ENCODE measurements at regions of chr11 and their contacts with region 1.

Region 1: GRCh38 chr11:88535916-88536547 is 198.5 kb upstream of the CTSC start:
- DNase-seq: no peak
- ATAC-seq: no peak
- H3K4me3 Mint-ChIP-seq: no peak overlapping the region
- H3K27ac Mint-ChIP-seq: no peak overlapping the region
- H3K4me1 Mint-ChIP-seq: peaks cover 8% of the 10 kb centered on the region
- H3K27me3 Mint-ChIP-seq: peaks cover 6% of the 10 kb centered on the region

Region 2: GRCh38 chr11:88484873-88485621 is 51.0 kb before region 1 on chr11:
- CTCF ChIA-PET with region 1: interaction called, 10 read pairs
- POLR2A ChIA-PET with region 1: no interaction called
- DNase-seq: peak; percentile 38
- ATAC-seq: peak; percentile 82
- H3K4me3 Mint-ChIP-seq: no peak overlapping the region
- H3K27ac Mint-ChIP-seq: no peak overlapping the region
- H3K4me1 Mint-ChIP-seq: peaks cover 4% of the 10 kb centered on the region
- H3K27me3 Mint-ChIP-seq: peaks cover 5% of the 10 kb centered on the region

Region 3: DNA sequence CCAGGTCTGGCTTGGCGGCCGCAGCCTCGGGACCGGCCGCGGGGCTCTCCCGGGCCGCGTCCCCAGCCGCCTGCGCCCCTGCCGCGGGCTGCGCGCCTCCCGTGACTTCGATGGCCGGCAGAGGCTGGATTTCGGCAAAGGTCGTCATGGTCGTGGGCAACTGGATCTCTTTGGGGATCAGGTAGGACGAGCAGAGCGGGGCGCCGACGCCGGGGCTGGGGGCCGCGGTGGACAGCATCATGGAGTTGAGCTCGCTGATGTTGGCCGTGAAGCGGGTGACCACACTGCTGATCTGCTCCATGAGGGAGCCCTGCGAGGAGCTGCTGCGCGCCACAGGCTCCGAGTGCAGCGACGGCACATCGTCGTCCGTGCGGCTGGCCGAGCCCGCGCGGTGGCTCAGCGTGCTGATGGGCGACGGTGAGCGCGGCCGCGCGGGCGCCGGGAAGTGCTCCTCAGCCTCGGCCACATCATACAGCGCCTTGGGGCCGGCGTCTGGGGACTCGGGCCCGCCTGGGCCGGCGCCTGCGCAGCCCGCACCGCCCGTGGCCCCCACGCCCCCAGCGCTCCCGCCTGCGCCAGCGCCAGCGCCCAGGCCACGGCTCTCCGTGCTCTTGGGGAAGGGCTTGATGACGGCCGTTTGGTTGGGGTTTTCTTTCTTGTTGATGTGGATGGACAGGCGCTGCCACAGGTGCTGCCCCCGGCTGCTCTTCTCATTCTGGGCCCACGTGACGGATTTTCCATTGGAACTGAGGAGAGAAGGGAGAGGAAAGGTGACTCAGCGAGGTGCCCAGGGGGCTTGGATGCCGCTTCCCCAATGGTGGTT is 27.1 kb before region 1 on chr11:
- CTCF ChIA-PET with region 1: no interaction called
- POLR2A ChIA-PET with region 1: no interaction called
- DNase-seq: peak; percentile 28
- ATAC-seq: peak; percentile 91
- H3K4me3 Mint-ChIP-seq: peak overlapping the region; percentile 67
- H3K27ac Mint-ChIP-seq: no peak overlapping the region
- H3K4me1 Mint-ChIP-seq: peaks cover 13% of the 10 kb centered on the region
- H3K27me3 Mint-ChIP-seq: peaks cover 71% of the 10 kb centered on the region

Region 4: DNA sequence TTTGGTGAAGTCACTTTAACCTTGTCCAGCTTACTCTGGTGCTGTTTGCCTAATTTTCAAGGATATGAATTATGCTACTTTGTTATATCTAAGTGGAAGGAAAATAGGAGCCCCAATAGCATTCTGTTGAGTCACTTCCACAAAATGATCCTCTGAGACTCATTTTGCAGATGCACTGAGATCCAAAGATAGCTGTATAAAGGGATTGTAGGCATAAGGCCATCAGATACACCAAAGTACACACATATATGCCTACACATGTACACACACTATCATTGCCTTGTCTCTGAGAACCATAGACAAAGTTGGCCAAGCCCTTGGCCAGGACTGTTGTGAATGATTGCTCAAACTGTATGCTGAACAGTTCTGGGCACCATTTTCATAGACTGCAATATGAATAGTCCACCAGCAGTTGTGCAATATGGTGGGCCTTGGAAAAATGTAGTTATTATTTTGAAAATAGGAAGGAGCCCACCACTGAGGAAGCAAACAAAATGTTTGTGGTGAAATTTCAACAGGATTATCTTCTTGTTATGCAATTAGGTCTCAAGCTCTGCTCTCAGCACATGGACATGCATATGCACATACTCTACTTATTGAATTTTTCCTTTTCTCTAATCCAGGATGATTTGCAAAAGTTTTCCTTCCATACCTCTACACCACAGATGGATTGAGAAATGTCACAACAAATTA is 12.5 kb before region 1 on chr11:
- CTCF ChIA-PET with region 1: no interaction called
- POLR2A ChIA-PET with region 1: no interaction called
- DNase-seq: no peak
- ATAC-seq: no peak
- H3K4me3 Mint-ChIP-seq: no peak overlapping the region
- H3K27ac Mint-ChIP-seq: no peak overlapping the region
- H3K4me1 Mint-ChIP-seq: no peaks in the 10 kb centered on the region
- H3K27me3 Mint-ChIP-seq: peaks cover 12% of the 10 kb centered on the region